Dendritic cell treated with granulocyte-macrophage colony-stimulating factor and Interleukin-4, amounts not matched to agents 40 ng/mL and 50 ng/mL, for 4 days (primary cell): ENCODE measurements at regions of chr18 and their contacts with region 1.

Region 1: DNA sequence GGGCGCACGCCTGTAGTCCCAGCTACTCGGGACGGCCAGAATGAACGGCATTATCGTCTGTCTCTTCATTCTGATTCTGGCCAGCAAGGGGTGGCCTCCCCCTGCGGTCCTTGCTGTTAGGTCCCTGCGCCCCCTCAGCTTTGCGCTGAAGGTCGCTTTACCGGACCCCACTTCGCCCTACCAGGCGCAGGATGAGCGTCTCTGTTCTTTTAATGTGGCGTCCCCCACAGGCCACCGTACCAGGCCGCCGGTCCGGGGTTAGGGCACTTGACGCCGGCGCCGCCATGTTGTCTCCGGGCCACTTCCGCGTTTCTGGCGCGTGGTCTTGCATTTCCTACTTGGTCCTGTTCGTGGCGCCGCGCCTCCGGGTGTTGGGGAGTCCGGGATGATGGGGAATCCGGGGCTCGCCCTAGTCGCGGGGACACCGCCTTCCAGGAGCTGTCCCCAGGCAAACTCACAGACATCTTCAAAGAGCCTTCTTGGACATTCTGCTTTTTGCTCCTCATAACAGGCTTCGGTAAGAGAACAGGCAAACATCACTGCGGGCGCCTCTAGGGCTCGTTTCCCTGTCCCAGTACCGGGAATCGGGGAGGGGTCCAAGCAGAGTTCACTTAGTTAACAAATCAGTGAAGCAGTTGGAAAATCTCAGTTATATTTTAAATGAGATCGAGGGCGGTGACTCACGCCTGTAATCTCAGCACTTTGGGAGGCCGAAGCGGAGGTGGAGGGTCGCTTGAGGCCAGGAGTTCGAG is 8.5 kb upstream of the NARS1 start:
- H3K4me3 Mint-ChIP-seq: peak overlapping the region; percentile 90
- H3K27ac Mint-ChIP-seq: peak overlapping the region; percentile 96
- H3K4me1 Mint-ChIP-seq: peaks cover 18% of the 10 kb centered on the region
- H3K27me3 Mint-ChIP-seq: no peaks in the 10 kb centered on the region

Region 2: GRCh38 chr18:57666818-57667497 is 36.8 kb after region 1 on chr18:
- intact Hi-C with region 1: loop called (anchors 5 kb)
- H3K4me3 Mint-ChIP-seq: no peak overlapping the region
- H3K27ac Mint-ChIP-seq: peak overlapping the region; percentile 74
- H3K4me1 Mint-ChIP-seq: peaks cover 44% of the 10 kb centered on the region
- H3K27me3 Mint-ChIP-seq: no peaks in the 10 kb centered on the region

Region 3: DNA sequence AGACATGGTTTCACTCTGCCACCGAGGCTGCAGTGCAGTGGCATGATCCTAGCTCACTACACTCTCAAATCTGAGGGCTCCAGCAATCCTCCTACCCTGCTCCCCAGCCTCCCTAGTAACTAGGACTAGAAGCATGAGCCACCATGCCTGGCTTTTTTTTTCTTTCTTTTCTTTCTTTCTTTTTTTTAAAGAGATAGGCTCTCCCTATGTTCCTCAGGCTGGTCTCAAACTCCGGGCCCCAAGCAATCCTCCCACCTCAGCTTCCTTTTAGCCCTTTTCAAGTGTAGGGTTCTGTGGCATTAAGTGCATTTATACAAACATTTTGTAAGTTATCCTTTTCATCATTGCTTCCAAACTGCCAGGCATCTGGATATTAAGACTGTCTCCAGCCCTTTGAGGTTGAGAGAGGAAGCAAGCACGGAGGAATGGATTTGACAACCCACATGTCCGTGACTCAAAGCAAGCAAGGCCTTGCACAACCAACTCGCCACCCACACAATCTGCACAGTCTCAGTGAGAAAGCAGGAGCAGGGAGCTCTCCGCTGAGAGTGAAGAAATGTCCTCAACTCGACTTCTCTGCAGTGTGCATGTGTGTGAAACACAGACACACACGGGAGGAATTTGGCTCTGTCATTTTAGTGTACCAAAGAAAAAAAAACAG is 107.4 kb after region 1 on chr18:
- intact Hi-C with region 1: loop called (anchors 5 kb)
- H3K4me3 Mint-ChIP-seq: peak overlapping the region; percentile 67
- H3K27ac Mint-ChIP-seq: peak overlapping the region; percentile 89
- H3K4me1 Mint-ChIP-seq: peaks cover 26% of the 10 kb centered on the region
- H3K27me3 Mint-ChIP-seq: no peaks in the 10 kb centered on the region

Region 4: GRCh38 chr18:57780706-57781347 is 150.6 kb after region 1 on chr18:
- intact Hi-C with region 1: loop called (anchors 2 kb)
- H3K4me3 Mint-ChIP-seq: peak overlapping the region; percentile 39
- H3K27ac Mint-ChIP-seq: peak overlapping the region; percentile 80
- H3K4me1 Mint-ChIP-seq: peaks cover 31% of the 10 kb centered on the region
- H3K27me3 Mint-ChIP-seq: no peaks in the 10 kb centered on the region